ENCODE measurements at regions of chr7 and their contacts with region 1.

Region 1: DNA sequence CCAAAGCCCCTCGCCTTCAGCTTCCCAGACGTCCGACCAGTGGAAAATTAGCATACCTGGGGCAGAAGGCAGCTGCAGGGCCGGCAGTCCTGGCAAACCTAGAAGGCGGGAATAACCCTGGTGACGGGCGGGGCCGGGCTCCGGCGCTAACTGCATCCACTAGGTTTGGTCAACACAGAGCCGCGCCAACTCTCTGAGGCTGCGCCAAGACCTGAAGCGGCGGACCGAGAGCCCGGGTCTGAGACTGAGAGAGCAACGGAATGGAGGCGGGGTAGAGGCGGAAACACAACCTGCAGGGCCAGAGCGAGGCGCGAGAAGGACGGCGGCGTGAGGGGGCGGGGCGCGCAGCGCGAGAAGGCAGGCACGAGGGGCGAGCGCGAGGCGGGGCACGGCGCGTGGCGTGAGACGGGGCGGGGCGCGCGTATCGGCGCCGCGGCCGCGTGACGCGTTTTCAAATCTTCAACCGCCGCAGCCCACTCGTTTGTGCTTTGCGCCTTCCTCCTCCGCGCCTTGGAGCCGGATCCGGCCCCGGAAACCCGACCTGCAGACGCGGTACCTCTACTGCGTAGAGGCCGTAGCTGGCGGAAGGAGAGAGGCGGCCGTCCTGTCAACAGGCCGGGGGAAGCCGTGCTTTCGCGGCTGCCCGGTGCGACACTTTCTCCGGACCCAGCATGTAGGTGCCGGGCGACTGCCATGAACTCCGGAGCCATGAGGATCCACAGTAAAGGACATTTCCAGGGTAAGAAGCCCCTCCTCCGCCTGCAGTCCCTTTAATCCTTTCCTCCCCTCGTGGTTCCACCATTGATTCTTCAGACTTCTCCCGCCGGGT is at the starts of genes DBF4 and SLC25A40:
- DNase-seq: peak; percentile 97
- H3K4me3 Mint-ChIP-seq: peak within 1 kb of the TSS; percentile 77
- H3K27ac Mint-ChIP-seq: peak within 1 kb of the TSS; percentile 93
- H3K4me1 Mint-ChIP-seq: peaks cover 43% of the 10 kb centered on the region
- H3K27me3 Mint-ChIP-seq: no peaks in the 10 kb centered on the region
- total RNA-seq, gene DBF4: 75.8 to 78.4 TPM
- total RNA-seq, gene SLC25A40: 47.9 to 54.9 TPM

Region 2: GRCh38 chr7:87600130-87601124 is 275.8 kb before region 1 on chr7 and contains the start of gene ABCB1:
- CTCF ChIA-PET with region 1: no interaction called
- POLR2A ChIA-PET with region 1: no interaction called
- intact Hi-C with region 1: loop called (anchors 1 kb)
- DNase-seq: peak; percentile 61
- H3K4me3 Mint-ChIP-seq: peak within 1 kb of the TSS; percentile 79
- H3K27ac Mint-ChIP-seq: peak within 1 kb of the TSS; percentile 19
- H3K4me1 Mint-ChIP-seq: peaks cover 22% of the 10 kb centered on the region
- H3K27me3 Mint-ChIP-seq: peaks cover 38% of the 10 kb centered on the region
- total RNA-seq, gene ABCB1: 4.7 to 5.4 TPM

Region 3: DNA sequence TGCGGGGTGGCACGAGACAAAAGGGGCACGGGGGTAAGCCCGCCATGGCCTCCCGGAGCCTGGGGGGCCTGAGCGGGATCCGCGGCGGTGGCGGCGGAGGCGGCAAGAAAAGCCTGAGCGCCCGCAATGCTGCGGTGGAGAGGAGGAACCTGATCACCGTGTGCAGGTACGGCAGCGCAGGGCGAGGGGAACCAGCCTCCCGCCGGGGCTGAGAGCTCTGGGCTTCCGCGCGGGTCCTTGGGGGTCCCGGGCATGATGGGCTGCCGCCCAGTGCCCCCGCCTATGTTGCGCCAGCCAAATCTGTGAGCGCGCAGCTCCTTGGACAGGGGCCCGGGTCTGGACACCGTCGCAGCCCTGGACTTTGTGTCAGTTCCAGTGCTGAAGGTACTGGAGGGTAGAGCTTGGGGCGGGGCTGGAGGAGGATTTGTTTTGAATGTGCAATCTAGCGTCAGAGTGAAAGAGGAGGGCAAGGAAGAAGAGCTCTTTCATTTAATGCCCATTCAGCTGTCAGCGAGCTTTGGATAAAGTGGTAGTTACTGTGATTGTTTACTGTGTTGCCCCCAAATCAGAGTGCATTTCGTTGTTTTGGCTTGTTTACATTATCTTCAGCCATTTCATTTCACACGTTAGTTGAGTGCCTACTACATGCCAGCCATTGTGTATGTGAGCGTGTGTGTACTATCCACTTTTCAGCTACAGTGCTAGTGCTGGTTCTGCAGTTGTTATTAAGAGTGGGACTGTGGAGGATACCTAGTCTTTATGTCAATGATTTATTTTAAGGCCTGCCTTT is 247.3 kb before region 1 on chr7:
- CTCF ChIA-PET with region 1: no interaction called
- POLR2A ChIA-PET with region 1: no interaction called
- intact Hi-C with region 1: loop called (anchors 1 kb)
- DNase-seq: peak; percentile 35
- H3K4me3 Mint-ChIP-seq: peak overlapping the region; percentile 74
- H3K27ac Mint-ChIP-seq: no peak overlapping the region
- H3K4me1 Mint-ChIP-seq: peaks cover 9% of the 10 kb centered on the region
- H3K27me3 Mint-ChIP-seq: peaks cover 14% of the 10 kb centered on the region

Region 4: GRCh38 chr7:87858417-87859100 is 17.7 kb before region 1 on chr7:
- CTCF ChIA-PET with region 1: no interaction called
- POLR2A ChIA-PET with region 1: interaction called, 3 read pairs
- intact Hi-C with region 1: loop called (anchors 2 kb)
- DNase-seq: no peak
- H3K4me3 Mint-ChIP-seq: no peak overlapping the region
- H3K27ac Mint-ChIP-seq: no peak overlapping the region
- H3K4me1 Mint-ChIP-seq: peaks cover 8% of the 10 kb centered on the region
- H3K27me3 Mint-ChIP-seq: no peaks in the 10 kb centered on the region

Region 5: DNA sequence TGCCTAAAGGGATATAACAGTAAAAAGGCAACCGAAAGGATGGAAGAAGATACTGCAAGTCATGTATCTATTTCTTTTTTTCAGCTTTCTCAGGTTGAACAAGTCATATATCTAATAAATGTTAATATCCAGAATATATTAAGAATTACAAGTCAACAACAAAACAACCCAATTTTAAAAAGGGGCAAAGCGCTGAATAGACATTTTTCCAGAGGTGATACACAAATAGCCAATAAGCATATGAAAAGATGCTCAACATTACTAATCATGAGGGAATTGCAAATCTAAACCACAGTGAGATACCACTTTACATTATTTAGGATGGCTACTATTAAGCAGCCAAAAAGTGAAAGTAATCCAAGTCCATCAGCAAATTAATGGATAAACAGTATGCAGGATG is 23.0 kb after region 1 on chr7:
- CTCF ChIA-PET with region 1: no interaction called
- POLR2A ChIA-PET with region 1: no interaction called
- intact Hi-C with region 1: no loop called
- DNase-seq: no peak
- H3K4me3 Mint-ChIP-seq: no peak overlapping the region
- H3K27ac Mint-ChIP-seq: no peak overlapping the region
- H3K4me1 Mint-ChIP-seq: peaks cover 2% of the 10 kb centered on the region
- H3K27me3 Mint-ChIP-seq: no peaks in the 10 kb centered on the region

Region 6: DNA sequence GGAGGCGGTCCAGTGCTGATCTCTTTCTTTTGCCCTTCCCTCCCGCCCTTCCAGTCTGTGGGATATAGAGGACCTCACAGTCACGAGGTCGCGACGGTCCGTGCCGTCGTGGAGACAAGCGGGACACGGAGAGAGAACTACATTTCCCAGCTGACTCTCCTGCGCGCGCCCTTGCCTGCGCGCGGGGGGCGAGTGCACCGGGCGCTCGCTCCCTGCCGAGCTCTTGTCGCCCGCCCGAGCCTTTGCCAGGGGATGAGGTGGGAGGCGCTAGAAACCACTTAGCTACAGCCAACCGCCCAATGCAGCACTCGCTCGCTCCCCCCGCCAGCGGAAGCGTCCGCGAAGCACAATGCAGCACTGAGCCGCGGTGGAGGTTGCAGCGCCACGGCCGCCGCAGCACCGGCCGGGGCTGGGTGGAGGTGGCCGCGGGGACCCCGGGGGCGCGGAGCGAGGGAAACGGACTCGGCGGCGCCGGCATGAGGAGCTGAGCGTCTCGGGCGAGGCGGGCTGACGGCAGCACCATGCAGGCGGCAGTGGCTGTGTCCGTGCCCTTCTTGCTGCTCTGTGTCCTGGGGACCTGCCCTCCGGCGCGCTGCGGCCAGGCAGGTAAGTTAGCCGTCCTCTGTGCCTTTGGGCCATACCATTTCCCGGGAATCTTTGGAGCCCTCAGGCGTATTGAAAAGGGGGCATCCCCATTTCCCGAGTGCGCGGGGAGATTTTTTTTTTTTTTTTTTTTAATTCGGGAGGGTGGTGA is 57.9 kb after region 1 on chr7 and contains the start of gene ADAM22:
- CTCF ChIA-PET with region 1: no interaction called
- POLR2A ChIA-PET with region 1: interaction called, 4 read pairs
- intact Hi-C with region 1: loop called (anchors 1 kb)
- DNase-seq: peak; percentile 89
- H3K4me3 Mint-ChIP-seq: peak within 1 kb of the TSS; percentile 81
- H3K27ac Mint-ChIP-seq: no peak within 1 kb of the TSS
- H3K4me1 Mint-ChIP-seq: peaks cover 9% of the 10 kb centered on the region
- H3K27me3 Mint-ChIP-seq: peaks cover 5% of the 10 kb centered on the region
- total RNA-seq, gene ADAM22: 1.8 to 2.2 TPM

Region 7: GRCh38 chr7:88219781-88220747 is 343.8 kb after region 1 on chr7 and contains the start of gene SRI:
- CTCF ChIA-PET with region 1: no interaction called
- POLR2A ChIA-PET with region 1: no interaction called
- intact Hi-C with region 1: loop called (anchors 2 kb)
- DNase-seq: peak; percentile 92
- H3K4me3 Mint-ChIP-seq: peak within 1 kb of the TSS; percentile 87
- H3K27ac Mint-ChIP-seq: peak within 1 kb of the TSS; percentile 89
- H3K4me1 Mint-ChIP-seq: peaks cover 15% of the 10 kb centered on the region
- H3K27me3 Mint-ChIP-seq: no peaks in the 10 kb centered on the region
- total RNA-seq, gene SRI: 219 to 220 TPM

Region 8: DNA sequence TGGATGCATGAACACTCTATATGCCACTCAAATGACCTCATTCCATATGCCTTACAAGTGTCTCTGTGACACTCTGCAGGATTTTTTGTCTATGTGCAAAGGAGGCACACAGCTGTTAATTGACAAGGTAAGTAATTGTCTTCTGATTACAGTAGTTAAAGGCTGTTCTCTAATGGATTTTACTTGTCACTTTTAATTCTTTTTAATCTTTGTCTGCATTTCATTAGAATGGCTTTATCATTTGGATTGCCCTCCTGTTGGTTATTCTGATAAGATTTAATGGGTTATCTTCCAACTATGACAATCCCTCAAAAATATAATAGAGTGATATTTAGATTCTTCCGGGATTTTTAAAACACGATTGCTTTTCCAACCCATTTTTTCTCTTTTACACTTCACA is 1209.3 kb after region 1 on chr7:
- CTCF ChIA-PET with region 1: no interaction called
- POLR2A ChIA-PET with region 1: no interaction called
- intact Hi-C with region 1: no loop called
- DNase-seq: no peak
- H3K4me3 Mint-ChIP-seq: no peak overlapping the region
- H3K27ac Mint-ChIP-seq: no peak overlapping the region
- H3K4me1 Mint-ChIP-seq: no peaks in the 10 kb centered on the region
- H3K27me3 Mint-ChIP-seq: no peaks in the 10 kb centered on the region